ENCODE measurements at regions of chr2 and their contacts with region 1.

Region 1: DNA sequence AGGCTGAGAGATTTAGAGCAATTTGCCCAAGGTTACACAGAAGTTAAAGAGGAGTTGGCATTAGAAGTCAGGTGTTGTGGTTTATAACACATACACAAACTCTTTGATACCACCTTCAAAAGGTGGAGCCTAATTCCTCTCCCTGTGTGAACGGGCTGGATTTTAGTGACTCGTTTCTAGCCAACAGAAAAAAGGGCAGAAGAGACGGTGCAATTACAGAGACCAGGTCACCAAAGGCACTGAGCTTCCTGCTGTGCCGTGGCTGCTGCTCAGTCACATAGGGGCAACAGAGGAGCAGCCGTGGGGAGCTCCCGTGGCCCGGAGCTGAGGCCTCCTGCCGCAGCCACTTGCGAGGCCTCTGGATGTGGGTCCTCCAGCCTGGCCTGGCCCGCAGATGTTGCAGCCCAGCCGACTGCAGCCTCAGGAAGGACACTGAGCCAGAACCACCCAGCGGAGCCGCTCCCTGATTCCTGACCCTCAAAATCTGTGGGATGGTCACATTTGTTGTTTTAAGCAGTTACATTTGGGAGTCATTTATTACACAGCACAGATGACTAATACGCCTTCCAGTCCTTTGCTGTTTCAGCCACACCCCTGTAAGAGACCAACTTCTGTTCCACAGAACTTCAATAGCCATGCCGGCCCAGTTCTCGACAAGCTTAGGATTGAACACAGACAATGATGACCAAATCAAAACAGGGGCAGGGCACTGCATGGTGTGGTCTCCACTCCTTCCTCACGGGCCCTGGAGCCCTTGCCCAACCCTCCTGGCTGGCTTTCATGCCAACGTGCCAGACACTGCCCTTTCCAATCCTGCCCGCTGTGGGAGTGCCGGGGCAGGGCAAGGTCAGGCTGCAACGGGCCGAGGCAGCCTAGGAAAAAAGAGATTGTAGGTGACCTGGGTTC is 17.1 kb downstream of the EDAR start:
- DNase-seq: no peak
- ATAC-seq: peak; percentile 38
- H3K4me3 Mint-ChIP-seq: no peak overlapping the region
- H3K27ac Mint-ChIP-seq: peak overlapping the region; percentile 29
- H3K4me1 Mint-ChIP-seq: peaks cover 70% of the 10 kb centered on the region
- H3K27me3 Mint-ChIP-seq: no peaks in the 10 kb centered on the region

Region 2: GRCh38 chr2:108927936-108928659 is 43.8 kb before region 1 on chr2:
- CTCF ChIA-PET with region 1: interaction called, 26 read pairs
- POLR2A ChIA-PET with region 1: interaction called, 6 read pairs
- intact Hi-C with region 1: no loop called
- DNase-seq: peak; percentile 64
- ATAC-seq: peak; percentile 68
- H3K4me3 Mint-ChIP-seq: no peak overlapping the region
- H3K27ac Mint-ChIP-seq: no peak overlapping the region
- H3K4me1 Mint-ChIP-seq: peaks cover 4% of the 10 kb centered on the region
- H3K27me3 Mint-ChIP-seq: no peaks in the 10 kb centered on the region

Region 3: GRCh38 chr2:108960006-108960405 is 11.9 kb before region 1 on chr2:
- CTCF ChIA-PET with region 1: interaction called, 35 read pairs
- POLR2A ChIA-PET with region 1: interaction called, 4 read pairs
- intact Hi-C with region 1: no loop called
- DNase-seq: peak; percentile 42
- ATAC-seq: peak; percentile 27
- H3K4me3 Mint-ChIP-seq: no peak overlapping the region
- H3K27ac Mint-ChIP-seq: peak overlapping the region; percentile 38
- H3K4me1 Mint-ChIP-seq: peaks cover 81% of the 10 kb centered on the region
- H3K27me3 Mint-ChIP-seq: no peaks in the 10 kb centered on the region

Region 4: GRCh38 chr2:109254174-109254904 is 282.4 kb after region 1 on chr2:
- CTCF ChIA-PET with region 1: no interaction called
- POLR2A ChIA-PET with region 1: no interaction called
- intact Hi-C with region 1: loop called in 1 of 2 experiments (anchors 5 kb)
- DNase-seq: no peak
- ATAC-seq: no peak
- H3K4me3 Mint-ChIP-seq: no peak overlapping the region
- H3K27ac Mint-ChIP-seq: no peak overlapping the region
- H3K4me1 Mint-ChIP-seq: no peaks in the 10 kb centered on the region
- H3K27me3 Mint-ChIP-seq: no peaks in the 10 kb centered on the region